Vagina (tissue), 2 donors: ENCODE measurements at regions of chr16 and their contacts with region 1.

Region 1: DNA sequence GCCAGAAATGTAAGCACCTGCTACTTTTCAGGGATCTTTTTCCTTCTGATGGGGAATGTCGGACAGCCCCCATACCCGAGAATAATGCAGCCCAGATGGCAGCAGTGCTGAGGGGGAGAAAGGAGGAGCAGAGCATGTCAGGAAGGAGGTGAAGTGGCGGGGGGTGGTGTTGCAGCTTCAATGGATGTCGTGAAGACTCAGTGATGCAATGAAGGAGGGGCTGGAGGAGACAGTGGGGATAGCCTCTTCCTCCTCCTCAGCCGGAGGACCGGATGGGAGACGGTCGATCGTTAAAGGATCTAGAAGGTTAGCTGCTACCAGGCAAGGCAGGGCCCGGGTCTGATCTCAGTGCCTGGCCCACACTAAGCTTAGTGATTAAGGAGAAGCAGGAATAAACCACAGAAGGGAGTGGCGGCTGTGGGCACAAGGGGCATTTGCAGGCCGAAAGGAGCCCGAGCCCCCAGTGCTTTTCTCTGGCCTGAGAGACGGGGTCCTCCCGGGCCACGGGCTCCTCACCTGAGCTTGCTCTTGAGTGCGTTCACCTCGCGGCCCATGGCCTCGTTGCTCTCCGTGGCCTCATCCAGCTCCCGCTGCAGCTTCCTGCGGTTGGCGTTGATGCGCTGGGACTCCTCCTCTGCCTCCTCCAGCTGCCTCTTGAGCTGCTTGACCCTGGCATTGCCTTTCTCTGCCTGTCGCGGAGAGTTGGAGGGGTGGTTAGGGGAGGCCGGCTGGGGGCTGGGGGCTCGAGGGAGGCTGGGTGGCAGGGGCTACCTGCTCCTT is 64.5 kb downstream of the NDE1 start:
- DNase-seq: no peak
- H3K4me3 ChIP-seq: no peak overlapping the region
- H3K27ac ChIP-seq: no peak overlapping the region
- H3K4me1 ChIP-seq: peaks cover 4% of the 10 kb centered on the region
- H3K27me3 ChIP-seq: no peaks in the 10 kb centered on the region
- CTCF ChIP-seq: no peak
- POLR2A ChIP-seq: no peak

Region 2: GRCh38 chr16:15653227-15653626 is 61.4 kb before region 1 on chr16:
- intact Hi-C with region 1: loop called (anchors 2 kb)
- DNase-seq: no peak
- H3K4me3 ChIP-seq: no peak overlapping the region
- H3K27ac ChIP-seq: peak overlapping the region; percentile 53
- H3K4me1 ChIP-seq: peaks cover 34% of the 10 kb centered on the region
- H3K27me3 ChIP-seq: no peaks in the 10 kb centered on the region
- CTCF ChIP-seq: no peak
- POLR2A ChIP-seq: no peak

Region 3: DNA sequence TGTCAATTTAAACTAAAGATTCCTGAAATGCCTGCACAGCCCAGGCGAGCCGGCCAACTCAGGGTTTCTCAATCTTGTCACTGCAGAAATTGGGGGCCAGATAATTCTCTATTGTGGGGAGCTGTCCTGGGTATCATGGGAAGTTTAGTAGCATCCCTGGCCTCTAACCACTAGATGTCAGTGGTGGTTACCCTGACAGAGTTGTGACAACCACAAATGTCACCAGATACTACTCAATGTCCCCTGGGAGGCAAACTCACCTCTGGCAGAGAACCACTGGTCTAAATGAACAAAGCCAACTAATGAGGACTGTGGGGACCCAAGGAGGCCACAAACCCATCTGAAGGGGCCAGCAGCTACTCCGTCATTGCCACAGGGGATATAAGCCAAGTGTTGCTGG is 51.3 kb after region 1 on chr16:
- intact Hi-C with region 1: no loop called
- DNase-seq: no peak
- H3K4me3 ChIP-seq: no peak overlapping the region
- H3K27ac ChIP-seq: no peak overlapping the region
- H3K4me1 ChIP-seq: no peaks in the 10 kb centered on the region
- H3K27me3 ChIP-seq: no peaks in the 10 kb centered on the region
- CTCF ChIP-seq: peak in 2 of 3 experiments; percentile 4 to 40
- POLR2A ChIP-seq: no peak